ENCODE measurements at regions of chr9 and their contacts with region 1.

Region 1: GRCh38 chr9:30140407-30140806 is 2244.0 kb upstream of the ACO1 start:
- DNase-seq: no peak
- ATAC-seq: no peak
- H3K4me3 ChIP-seq: no peak overlapping the region
- H3K27ac ChIP-seq: no peak overlapping the region
- H3K4me1 ChIP-seq: no peaks in the 10 kb centered on the region
- H3K27me3 ChIP-seq: no peaks in the 10 kb centered on the region
- CTCF ChIP-seq: no peak

Region 2: DNA sequence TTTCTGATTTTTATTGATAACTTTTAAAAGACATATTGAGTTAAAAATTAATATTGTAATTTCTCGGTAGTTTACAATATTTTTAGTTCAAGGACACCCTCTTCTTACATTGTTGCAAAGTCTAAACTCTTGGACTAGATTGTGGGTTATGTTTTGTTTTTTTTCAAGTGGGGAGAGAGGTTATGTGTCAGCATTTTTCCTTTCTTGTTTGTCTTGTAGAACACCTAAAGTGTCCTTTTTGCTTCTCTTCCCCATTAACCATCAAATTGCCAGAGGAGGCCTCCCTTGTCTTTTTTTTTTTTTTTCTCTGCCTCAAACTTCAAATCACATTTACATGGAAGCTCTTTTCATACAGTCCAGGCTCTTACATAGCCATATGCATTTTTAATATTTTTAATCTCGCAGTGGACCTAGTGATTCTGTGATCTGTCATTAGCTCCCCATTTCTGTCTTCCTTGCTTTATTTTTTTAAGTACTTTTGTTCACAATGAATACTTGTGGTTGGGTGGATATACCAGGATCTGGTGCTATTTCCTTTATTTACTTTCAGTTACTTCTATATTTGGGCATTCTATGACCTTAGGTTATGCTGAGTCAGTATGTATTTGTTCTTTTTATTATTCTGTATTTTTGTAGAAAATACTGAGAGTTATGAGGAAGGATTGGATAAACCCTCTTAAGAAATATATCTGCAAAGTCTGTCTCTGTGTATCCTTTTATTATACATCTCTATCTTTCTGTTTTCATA is 36.6 kb before region 1 on chr9:
- intact Hi-C with region 1: loop called in 1 of 10 experiments (anchors 10 kb)
- DNase-seq: no peak
- ATAC-seq: no peak
- H3K4me3 ChIP-seq: no peak overlapping the region
- H3K27ac ChIP-seq: no peak overlapping the region
- H3K4me1 ChIP-seq: no peaks in the 10 kb centered on the region
- H3K27me3 ChIP-seq: no peaks in the 10 kb centered on the region
- CTCF ChIP-seq: no peak